ENCODE measurements at regions of chr1 and their contacts with region 1.

Region 1: GRCh38 chr1:245822987-245823386 is 668.2 kb downstream of the KIF26B start:
- DNase-seq: peak; percentile 74
- H3K4me3 ChIP-seq: no peak overlapping the region
- H3K27ac ChIP-seq: peak overlapping the region; percentile 43
- H3K4me1 ChIP-seq: peaks cover 10% of the 10 kb centered on the region
- H3K27me3 ChIP-seq: no peaks in the 10 kb centered on the region
- CTCF ChIP-seq: no peak

Region 2: DNA sequence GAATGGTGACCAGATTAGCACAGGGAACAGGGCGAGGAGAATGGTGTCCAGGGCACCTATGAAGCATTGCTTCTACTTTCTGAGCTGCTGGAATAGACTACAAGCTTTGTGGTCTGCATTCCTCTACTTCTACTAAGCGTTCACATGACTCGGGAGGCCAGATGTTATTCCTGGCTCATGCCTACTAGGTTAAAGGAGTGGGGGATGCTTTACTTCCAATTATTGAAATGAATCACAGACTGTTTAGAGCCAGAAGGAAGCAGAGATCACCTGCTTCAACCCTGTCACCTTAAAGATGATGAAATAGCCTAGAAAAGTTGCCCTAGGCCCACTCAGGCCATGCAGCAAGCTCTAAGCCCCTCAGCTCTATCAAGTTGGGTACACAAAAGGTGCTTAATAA is 34.7 kb before region 1 on chr1:
- CTCF ChIA-PET with region 1: interaction called, 4 read pairs
- dilution Hi-C with region 1: no loop called
- in situ Hi-C with region 1: no loop called
- intact Hi-C with region 1: loop called (anchors 2 kb)
- DNase-seq: peak; percentile 92
- H3K4me3 ChIP-seq: no peak overlapping the region
- H3K27ac ChIP-seq: no peak overlapping the region
- H3K4me1 ChIP-seq: peaks cover 10% of the 10 kb centered on the region
- H3K27me3 ChIP-seq: no peaks in the 10 kb centered on the region
- CTCF ChIP-seq: no peak

Measured in mammary epithelial cell (primary cell).